ENCODE measurements at regions of chr5 and their contacts with region 1.

Region 1: DNA sequence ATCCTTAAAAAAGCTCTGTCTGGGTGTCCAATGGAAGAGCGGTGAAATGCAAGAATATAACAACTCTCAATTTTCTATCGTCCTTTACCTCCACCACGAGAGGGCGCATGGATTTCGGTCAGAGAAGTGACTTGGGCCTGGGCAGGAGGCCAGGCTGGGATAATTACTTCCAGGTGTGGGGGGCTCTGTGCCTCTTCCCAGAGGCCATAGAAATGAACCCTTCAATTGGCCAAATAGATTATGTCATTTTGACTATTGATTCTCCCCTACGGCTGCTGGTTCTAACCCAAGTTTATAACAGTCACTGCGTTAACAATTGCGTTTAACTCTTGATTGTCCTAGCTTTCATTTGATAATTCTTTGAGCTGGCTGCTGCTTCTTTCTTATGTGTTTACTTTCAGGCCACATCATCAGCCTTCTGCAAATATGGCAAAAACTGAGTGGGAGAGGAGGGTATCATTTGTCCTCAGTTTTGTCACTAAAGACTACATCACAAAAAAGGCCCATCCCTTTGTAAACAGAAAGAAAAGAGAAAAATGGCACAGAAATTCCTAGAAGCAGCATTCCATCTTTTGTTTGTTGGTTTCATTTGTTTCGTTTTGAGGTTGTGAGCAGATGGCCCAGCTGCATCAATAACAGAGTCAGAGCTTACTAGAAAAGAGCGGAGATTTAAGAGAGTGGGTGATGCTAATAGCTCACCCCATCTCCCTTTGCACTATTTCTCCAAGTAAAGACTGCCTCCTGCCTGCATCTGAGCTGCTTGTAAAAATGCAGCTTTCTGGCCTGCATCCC is 45.4 kb upstream of the ZFR start:
- DNase-seq: peak; percentile 75
- ATAC-seq: peak; percentile 82
- H3K4me3 ChIP-seq: peak overlapping the region in 2 of 3 experiments; percentile 2 to 30; a peak in 2 of 6 replicates
- H3K27ac ChIP-seq: no peak overlapping the region
- H3K4me1 ChIP-seq: peaks cover 39% of the 10 kb centered on the region
- H3K27me3 ChIP-seq: no peaks in the 10 kb centered on the region
- CTCF ChIP-seq: peak; percentile 91
- EP300 ChIP-seq: no peak
- POLR2A ChIP-seq: no peak
- RAD21 ChIP-seq: peak; percentile 85

Region 2: GRCh38 chr5:32522429-32523143 is 32.6 kb after region 1 on chr5:
- CTCF ChIA-PET with region 1: no interaction called
- POLR2A ChIA-PET with region 1: no interaction called
- in situ Hi-C with region 1: no loop called
- intact Hi-C with region 1: loop called (anchors 1 kb)
- DNase-seq: no peak
- ATAC-seq: no peak
- H3K4me3 ChIP-seq: no peak overlapping the region
- H3K27ac ChIP-seq: no peak overlapping the region
- H3K4me1 ChIP-seq: peaks cover 25% of the 10 kb centered on the region
- H3K27me3 ChIP-seq: no peaks in the 10 kb centered on the region
- CTCF ChIP-seq: no peak
- EP300 ChIP-seq: no peak
- POLR2A ChIP-seq: no peak
- RAD21 ChIP-seq: no peak

Region 3: DNA sequence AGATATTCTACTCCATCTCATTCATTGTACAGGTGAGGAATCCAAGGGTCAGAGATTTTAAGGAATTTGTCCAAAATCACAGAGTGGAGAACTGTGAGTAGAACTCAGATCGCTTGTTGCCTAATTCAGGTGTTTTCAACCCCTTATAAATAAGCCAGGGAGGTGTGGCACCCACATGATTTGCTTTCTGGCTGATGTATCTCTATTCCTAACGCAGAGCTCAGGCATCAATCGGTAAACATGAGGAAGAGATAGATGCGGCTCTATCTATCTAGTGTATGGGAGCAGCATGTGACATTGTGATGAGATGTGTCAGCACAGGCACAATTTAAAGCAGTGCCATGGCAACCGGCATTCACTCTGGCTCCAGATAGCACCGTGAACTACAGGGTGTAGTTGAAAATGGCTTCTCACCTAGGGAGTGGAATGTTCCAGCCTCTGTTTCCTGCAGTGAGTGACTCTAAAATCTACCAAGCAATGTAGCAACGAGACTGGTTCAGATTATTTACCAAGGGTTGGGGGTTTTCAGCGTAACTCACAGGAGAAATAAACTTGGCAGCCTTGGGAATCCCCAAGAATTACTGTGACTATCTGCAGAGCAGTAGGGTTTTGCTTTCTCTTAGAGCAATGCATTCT is 42.0 kb after region 1 on chr5:
- CTCF ChIA-PET with region 1: no interaction called
- POLR2A ChIA-PET with region 1: interaction called, 12 read pairs
- in situ Hi-C with region 1: no loop called
- intact Hi-C with region 1: no loop called
- DNase-seq: peak; percentile 82
- ATAC-seq: peak; percentile 90
- H3K4me3 ChIP-seq: peak overlapping the region; percentile 31 to 58 (median 42); a peak in 5 of 6 replicates
- H3K27ac ChIP-seq: peak overlapping the region; percentile 82
- H3K4me1 ChIP-seq: peaks cover 83% of the 10 kb centered on the region
- H3K27me3 ChIP-seq: no peaks in the 10 kb centered on the region
- CTCF ChIP-seq: no peak
- EP300 ChIP-seq: no peak; a peak in 1 of 4 replicates
- POLR2A ChIP-seq: no peak; a peak in 1 of 4 replicates
- RAD21 ChIP-seq: no peak

Region 4: DNA sequence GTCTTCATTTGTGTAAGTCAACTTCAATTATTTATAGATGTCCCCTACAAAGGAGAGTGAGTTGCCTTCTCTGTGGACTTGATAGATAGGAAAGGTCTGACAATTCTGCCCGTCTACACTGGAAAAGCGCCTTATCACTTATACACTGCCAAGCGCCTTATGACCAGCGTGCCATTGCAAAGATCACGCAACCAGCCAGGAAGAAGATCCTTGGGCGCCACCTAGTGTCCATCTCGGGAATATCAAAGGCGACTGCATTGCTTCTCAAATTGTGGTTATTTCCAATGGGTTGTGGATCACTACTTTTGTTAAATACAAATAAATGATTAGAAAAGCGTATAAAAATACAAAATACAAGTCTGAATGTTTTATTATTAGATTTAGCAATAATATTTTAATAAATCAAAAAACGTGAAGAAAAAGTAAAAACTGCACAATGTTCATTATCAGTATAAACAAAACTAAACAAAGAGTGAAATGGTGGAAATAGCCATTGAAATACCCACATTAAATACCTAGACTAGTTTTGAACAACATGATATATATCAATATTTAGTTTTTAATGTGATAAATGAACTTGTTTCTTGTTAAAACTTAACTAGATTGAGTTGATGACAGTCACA is 123.2 kb after region 1 on chr5:
- CTCF ChIA-PET with region 1: interaction called, 33 read pairs
- POLR2A ChIA-PET with region 1: interaction called, 4 read pairs
- in situ Hi-C with region 1: loop called (anchors 5 kb)
- intact Hi-C with region 1: loop called (anchors 1 kb)
- DNase-seq: peak; percentile 66
- ATAC-seq: peak; percentile 65
- H3K4me3 ChIP-seq: no peak overlapping the region
- H3K27ac ChIP-seq: no peak overlapping the region
- H3K4me1 ChIP-seq: no peaks in the 10 kb centered on the region
- H3K27me3 ChIP-seq: no peaks in the 10 kb centered on the region
- CTCF ChIP-seq: peak; percentile 89
- EP300 ChIP-seq: 0 out of 4 replicates have a peak, but pooled peaks of 1 of the 2 experiments have one; percentile 8
- POLR2A ChIP-seq: no peak
- RAD21 ChIP-seq: peak; percentile 86

Measured in HepG2 (cell line).